ENCODE measurements at regions of chr1 and their contacts with region 1.

Region 1: DNA sequence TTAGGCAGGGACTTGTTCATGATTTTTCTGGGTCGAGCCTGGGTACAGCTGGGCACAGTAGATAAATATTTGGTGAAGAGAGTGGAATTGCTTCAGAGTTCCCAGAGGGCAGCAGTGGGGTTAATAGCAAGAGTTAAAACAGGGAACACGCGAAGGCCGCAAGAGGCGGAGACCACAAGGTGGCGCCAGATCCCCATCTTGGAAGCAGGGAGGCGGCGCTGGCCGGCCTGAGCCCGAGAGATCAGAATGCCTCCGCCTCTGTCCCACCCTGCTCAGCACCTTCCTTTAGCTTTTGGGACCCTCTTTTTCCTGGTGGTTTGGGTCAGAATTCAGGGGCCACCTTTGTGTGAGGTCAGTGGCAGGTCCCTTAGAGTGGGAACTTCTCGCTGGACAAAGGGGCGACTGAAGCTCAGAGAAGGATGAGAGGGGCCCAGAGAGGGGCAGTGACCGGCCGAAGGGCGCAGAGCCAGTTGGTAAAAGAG is 6.5 kb upstream of the PADI2 start:
- DNase-seq: peak; percentile 11
- H3K4me3 ChIP-seq: no peak overlapping the region
- H3K27me3 ChIP-seq: no peaks in the 10 kb centered on the region
- CTCF ChIP-seq: peak; percentile 95

Region 2: DNA sequence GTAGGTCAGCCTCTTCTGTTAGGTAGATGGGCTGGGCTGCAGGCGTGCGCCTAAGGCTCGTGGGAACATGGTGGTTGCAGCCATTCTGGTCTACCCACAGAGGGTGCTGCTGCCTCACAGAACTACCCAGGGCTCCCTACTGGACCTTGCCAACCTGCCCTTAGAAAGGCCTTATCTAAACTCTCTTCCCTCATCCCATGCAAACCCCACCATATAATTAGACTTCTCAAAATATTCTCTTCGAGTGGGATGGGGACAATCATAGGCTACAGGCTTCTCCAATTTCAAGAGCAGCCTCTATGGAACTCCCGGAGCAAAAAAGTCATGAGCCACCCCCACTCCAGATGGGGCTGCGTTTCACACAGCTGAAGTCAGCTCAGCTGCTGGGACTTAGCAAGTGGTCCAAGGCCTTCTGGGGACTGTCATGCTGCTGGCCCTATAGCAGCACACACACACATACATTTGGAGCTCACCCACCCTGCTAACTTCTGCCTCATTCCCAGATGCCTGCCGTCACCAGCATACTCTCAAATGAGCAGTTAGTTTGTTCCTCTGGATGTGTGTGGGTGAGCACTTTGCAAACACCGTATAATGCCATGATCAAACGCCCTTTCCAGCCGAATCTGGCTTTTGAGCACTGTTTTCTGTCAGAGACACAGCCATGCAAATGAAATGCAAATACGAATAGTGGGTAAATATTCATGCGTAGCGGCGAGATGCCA is 65.9 kb before region 1 on chr1:
- CTCF ChIA-PET with region 1: interaction called, 15 read pairs
- POLR2A ChIA-PET with region 1: no interaction called
- DNase-seq: peak; percentile 4
- H3K4me3 ChIP-seq: no peak overlapping the region
- H3K27me3 ChIP-seq: no peaks in the 10 kb centered on the region; the same call in 1 of the 2 replicates
- CTCF ChIP-seq: peak; percentile 84

Region 3: GRCh38 chr1:17080880-17081279 is 44.9 kb before region 1 on chr1:
- CTCF ChIA-PET with region 1: no interaction called
- POLR2A ChIA-PET with region 1: no interaction called
- DNase-seq: no peak
- H3K4me3 ChIP-seq: no peak overlapping the region
- H3K27me3 ChIP-seq: peaks cover 3% of the 10 kb centered on the region
- CTCF ChIP-seq: no peak

Region 4: GRCh38 chr1:17190010-17190995 is 64.5 kb after region 1 on chr1:
- CTCF ChIA-PET with region 1: interaction called, 6 read pairs
- POLR2A ChIA-PET with region 1: interaction called, 10 read pairs
- DNase-seq: peak; percentile 94
- H3K4me3 ChIP-seq: no peak overlapping the region
- H3K27me3 ChIP-seq: no peaks in the 10 kb centered on the region
- CTCF ChIP-seq: no peak

Region 5: DNA sequence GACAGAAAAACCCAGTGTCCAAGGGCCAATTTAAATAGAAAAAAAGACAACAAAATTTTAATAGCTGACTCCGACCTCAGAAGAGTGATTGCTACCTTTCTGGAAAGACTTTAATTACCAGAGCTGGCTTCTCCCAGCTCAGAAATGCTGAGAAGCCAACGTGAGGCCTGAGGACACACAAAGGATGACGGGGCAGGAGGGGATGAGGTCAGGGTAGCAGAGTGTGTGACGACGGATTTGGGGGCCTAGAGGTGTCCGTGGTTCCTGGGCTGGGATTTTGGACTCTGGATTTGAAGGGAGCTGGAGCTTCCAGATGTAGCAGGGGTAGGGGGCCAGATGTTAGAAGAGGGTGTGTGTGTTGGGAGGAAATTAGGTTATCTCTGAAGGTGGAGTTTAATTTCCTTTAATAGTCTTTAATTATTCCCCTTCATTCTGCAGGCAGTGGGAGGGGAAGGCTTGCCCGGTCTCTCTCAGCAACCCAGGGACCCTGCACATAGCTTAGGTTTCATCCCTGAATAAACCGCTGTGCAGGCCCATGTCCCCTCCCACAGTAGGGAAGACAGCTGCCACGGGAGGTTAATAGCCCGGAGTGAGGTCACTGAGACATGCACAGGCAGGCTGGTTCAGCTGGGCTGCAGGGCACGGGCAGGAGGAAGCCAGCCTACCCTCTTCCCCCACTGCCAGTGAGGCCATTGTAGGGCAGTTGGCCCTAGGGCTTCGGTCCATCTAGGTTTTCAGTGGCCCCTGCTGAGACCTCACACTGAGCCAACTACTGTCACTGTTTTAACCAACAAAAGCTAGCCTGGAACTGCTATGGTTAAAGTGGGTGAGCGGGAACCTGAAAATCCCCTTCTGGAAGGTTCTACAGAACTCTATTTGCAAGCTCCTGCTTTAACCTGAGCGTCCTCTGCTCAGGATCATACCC is 119.3 kb after region 1 on chr1:
- CTCF ChIA-PET with region 1: interaction called, 347 read pairs
- POLR2A ChIA-PET with region 1: no interaction called
- DNase-seq: no peak
- H3K4me3 ChIP-seq: no peak overlapping the region
- H3K27me3 ChIP-seq: no peaks in the 10 kb centered on the region
- CTCF ChIP-seq: no peak

Region 6: DNA sequence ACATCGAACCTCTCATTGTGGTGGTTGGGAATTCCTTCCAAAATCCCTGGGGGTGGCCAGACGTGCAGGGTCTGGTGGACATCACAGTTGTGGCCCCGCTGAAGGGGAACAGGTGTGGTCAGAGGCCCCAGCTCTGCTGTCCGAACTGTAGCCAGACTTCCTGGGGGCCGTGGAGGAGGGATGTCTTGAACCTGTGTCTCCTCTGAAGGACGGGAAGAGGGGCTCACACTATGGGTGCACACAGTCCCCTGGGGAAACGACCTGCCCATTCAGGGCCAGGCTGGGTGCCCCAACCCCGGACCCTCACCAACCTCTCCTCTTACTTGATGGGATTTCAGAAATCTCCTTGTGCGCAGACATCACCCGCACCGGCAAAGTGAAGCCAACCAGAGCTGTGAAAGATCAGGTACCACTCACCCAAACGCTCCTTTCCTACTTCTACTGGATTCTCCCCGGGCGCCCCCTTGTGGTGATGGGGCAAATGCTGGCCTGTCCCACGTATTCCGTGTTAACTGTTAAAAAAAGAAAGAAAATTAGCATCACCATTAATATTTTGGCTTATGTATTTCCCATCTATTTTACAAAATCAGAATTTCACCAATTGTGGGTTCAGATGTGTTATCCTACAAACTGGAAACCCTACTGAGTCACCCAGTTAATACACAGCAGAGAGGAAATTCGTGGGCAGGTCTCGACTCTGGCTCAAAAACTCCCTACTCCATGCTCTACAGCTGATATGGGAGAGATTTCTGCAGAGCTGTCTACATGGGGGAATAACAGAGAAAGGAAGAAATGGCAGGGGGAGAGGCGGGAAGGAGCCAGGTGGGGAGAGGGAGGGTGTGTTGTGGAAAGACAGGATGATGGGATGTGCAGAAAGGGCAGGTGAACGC is 210.3 kb after region 1 on chr1:
- CTCF ChIA-PET with region 1: interaction called, 14 read pairs
- POLR2A ChIA-PET with region 1: no interaction called
- DNase-seq: no peak
- H3K4me3 ChIP-seq: no peak overlapping the region
- H3K27me3 ChIP-seq: peaks cover 6% of the 10 kb centered on the region
- CTCF ChIP-seq: peak; percentile 90

Measured in BJ (cell line).